ENCODE measurements at regions of chr9 and their contacts with region 1.

Region 1: DNA sequence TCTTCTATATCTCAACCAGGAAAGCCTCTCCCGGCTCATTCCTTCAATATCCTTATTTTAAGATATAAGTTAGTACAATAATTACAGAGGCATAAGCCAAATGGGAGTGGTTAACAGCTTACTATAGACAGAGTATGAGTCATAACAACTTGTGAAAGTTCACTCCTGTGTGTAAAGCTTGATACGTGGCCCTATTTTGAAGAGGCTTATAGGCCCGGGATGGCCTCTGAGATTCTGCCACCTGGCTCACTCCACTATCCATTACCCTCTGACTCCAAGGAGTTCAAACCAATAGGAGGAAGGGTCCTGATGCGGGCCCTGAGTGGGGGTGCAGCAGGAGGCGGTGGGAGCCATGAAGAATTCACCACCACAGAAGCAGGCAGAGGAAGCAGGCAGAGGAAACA is 36.6 kb downstream of the B4GALT1 start:
- DNase-seq: no peak
- ATAC-seq: peak; percentile 92
- H3K4me3 ChIP-seq: peak overlapping the region; percentile 1; the same call in 1 of the 2 replicates
- H3K27ac ChIP-seq: peak overlapping the region; percentile 75
- H3K4me1 ChIP-seq: peaks cover 52% of the 10 kb centered on the region
- H3K27me3 ChIP-seq: no peaks in the 10 kb centered on the region
- CTCF ChIP-seq: no peak
- EP300 ChIP-seq: no peak
- POLR2A ChIP-seq: no peak
- RAD21 ChIP-seq: 0 out of 2 replicates have a peak, but pooled peaks have one; percentile 4

Region 2: DNA sequence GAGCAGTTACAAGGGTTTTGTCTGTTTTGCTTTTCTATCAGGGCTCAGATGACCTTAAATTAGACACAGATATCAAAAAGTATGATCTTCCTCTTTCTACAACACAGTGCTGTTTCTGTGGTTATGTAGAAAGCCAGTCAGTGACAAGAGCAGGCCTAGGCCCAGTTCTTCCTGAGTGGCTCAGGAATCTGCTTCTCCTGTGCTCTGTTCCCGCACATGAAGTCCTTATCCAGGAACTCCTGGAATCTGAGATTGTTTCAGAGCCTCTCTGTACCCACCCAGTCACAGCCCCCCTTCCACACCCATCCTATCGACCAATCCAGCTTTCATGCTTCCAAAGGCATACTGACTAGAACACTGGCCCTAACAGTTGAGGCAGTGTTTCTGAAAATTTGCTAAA is 13.7 kb before region 1 on chr9:
- CTCF ChIA-PET with region 1: interaction called, 3 read pairs
- POLR2A ChIA-PET with region 1: interaction called, 6 read pairs
- RAD21 ChIA-PET with region 1: no interaction called
- SMC1A ChIA-PET with region 1: interaction called, 12 read pairs
- in situ Hi-C with region 1: no loop called
- intact Hi-C with region 1: no loop called
- DNase-seq: no peak
- ATAC-seq: peak; percentile 62
- H3K4me3 ChIP-seq: 0 out of 2 replicates have a peak overlapping the region, but pooled peaks have one; percentile 29
- H3K27ac ChIP-seq: peak overlapping the region; percentile 45
- H3K4me1 ChIP-seq: peaks cover 13% of the 10 kb centered on the region
- H3K27me3 ChIP-seq: no peaks in the 10 kb centered on the region
- CTCF ChIP-seq: no peak
- EP300 ChIP-seq: no peak
- POLR2A ChIP-seq: no peak
- RAD21 ChIP-seq: no peak

Region 3: GRCh38 chr9:33151007-33151557 is 20.6 kb after region 1 on chr9:
- CTCF ChIA-PET with region 1: interaction called, 15 read pairs
- POLR2A ChIA-PET with region 1: interaction called, 8 read pairs
- RAD21 ChIA-PET with region 1: no interaction called
- SMC1A ChIA-PET with region 1: interaction called, 172 read pairs
- in situ Hi-C with region 1: no loop called
- intact Hi-C with region 1: no loop called
- DNase-seq: no peak
- ATAC-seq: no peak
- H3K4me3 ChIP-seq: no peak overlapping the region
- H3K27ac ChIP-seq: 0 out of 2 replicates have a peak overlapping the region, but pooled peaks have one; percentile 20
- H3K4me1 ChIP-seq: peaks cover 54% of the 10 kb centered on the region
- H3K27me3 ChIP-seq: no peaks in the 10 kb centered on the region
- CTCF ChIP-seq: no peak
- EP300 ChIP-seq: no peak
- POLR2A ChIP-seq: no peak
- RAD21 ChIP-seq: no peak

Region 4: GRCh38 chr9:33159760-33160127 is 29.2 kb after region 1 on chr9:
- CTCF ChIA-PET with region 1: interaction called, 12 read pairs
- POLR2A ChIA-PET with region 1: interaction called, 23 read pairs
- RAD21 ChIA-PET with region 1: interaction called, 22 read pairs
- SMC1A ChIA-PET with region 1: interaction called, 172 read pairs
- in situ Hi-C with region 1: no loop called
- intact Hi-C with region 1: loop called (anchors 5 kb)
- DNase-seq: no peak
- ATAC-seq: peak; percentile 60
- H3K4me3 ChIP-seq: peak overlapping the region; percentile 90
- H3K27ac ChIP-seq: peak overlapping the region; percentile 92
- H3K4me1 ChIP-seq: peaks cover 74% of the 10 kb centered on the region
- H3K27me3 ChIP-seq: no peaks in the 10 kb centered on the region
- CTCF ChIP-seq: no peak
- EP300 ChIP-seq: peak in 1 of 2 experiments; percentile 81; a peak in 3 of 4 replicates
- POLR2A ChIP-seq: peak; percentile 53; the same call in 1 of the 2 replicates
- RAD21 ChIP-seq: 0 out of 2 replicates have a peak, but pooled peaks have one; percentile 18

Measured in GM12878 (cell line).